ENCODE measurements at regions of chr9 and their contacts with region 1.

Region 1: GRCh38 chr9:121059998-121060636 is 10.0 kb upstream of the C5 start:
- DNase-seq: no peak
- ATAC-seq: peak in 1 of 2 donors; percentile 48
- H3K4me3 ChIP-seq: no peak overlapping the region
- H3K27ac ChIP-seq: no peak overlapping the region
- H3K4me1 ChIP-seq: no peaks in the 10 kb centered on the region
- H3K27me3 ChIP-seq: no peaks in the 10 kb centered on the region

Region 2: DNA sequence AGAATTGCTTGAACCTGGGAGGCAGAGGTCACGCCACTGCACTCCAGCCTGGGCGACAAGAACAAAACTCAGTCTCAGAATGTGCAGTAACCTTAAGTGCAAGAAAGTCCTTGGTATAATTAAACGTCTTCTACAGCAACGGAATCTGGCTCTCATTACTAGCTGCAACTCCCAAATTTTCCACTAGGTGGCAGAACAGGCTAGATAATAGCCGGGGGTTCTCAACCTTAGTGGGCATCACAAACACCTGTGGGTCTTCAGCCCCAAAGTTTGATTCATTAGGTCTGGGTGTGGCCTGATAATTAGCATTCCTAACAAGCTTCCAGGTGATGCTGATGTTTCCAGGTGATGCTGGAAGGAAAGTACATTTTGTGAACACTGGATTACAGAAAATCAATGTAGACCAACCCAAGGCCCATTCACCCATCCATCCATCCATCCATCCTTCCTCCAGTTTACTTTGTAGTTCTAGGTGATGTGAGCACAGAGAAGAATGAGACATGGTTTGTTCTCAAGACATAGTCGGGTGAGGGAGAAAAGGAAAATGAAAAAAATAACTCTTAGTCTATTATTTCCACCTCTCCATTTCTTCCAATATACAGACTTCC is 304.2 kb before region 1 on chr9:
- intact Hi-C with region 1: loop called (anchors 5 kb)
- DNase-seq: peak in 1 of 3 donors; percentile 56
- ATAC-seq: peak; percentile 59 to 68
- H3K4me3 ChIP-seq: no peak overlapping the region
- H3K27ac ChIP-seq: no peak overlapping the region
- H3K4me1 ChIP-seq: no peaks in the 10 kb centered on the region
- H3K27me3 ChIP-seq: no peaks in the 10 kb centered on the region

Region 3: GRCh38 chr9:120820095-120820494 is 240.0 kb before region 1 on chr9:
- intact Hi-C with region 1: no loop called
- DNase-seq: no peak
- ATAC-seq: no peak
- H3K4me3 ChIP-seq: no peak overlapping the region
- H3K27ac ChIP-seq: no peak overlapping the region
- H3K4me1 ChIP-seq: no peaks in the 10 kb centered on the region
- H3K27me3 ChIP-seq: no peaks in the 10 kb centered on the region

Region 4: DNA sequence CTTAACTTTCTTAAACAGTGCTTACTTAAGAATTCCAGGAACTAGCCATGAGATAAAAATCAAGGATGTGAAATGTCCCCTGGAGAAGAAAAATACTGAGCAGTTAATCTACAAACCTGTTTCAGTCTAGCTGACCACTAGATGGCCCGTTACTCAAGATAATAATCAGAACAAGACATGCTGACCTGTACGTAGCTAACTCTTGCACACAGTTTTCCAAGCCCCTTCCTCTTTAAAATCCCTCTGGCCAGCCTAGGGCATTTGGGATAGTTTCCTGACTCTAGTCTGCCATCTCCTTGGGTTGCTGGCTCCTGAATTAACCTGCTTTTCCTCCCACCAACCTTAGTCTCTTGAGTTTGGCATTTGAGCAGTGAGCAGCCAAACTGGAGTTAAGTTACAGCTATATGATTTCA is 74.3 kb before region 1 on chr9:
- intact Hi-C with region 1: loop called in 3 of 4 experiments (anchors 5 to 10 kb)
- DNase-seq: no peak
- ATAC-seq: peak; percentile 71 to 81
- H3K4me3 ChIP-seq: no peak overlapping the region
- H3K27ac ChIP-seq: no peak overlapping the region
- H3K4me1 ChIP-seq: peaks cover 2% of the 10 kb centered on the region
- H3K27me3 ChIP-seq: no peaks in the 10 kb centered on the region

Region 5: GRCh38 chr9:121009650-121010049 is 50.5 kb before region 1 on chr9:
- intact Hi-C with region 1: loop called in 1 of 4 experiments (anchors 10 kb)
- DNase-seq: no peak
- ATAC-seq: no peak
- H3K4me3 ChIP-seq: no peak overlapping the region
- H3K27ac ChIP-seq: no peak overlapping the region
- H3K4me1 ChIP-seq: peaks cover 1% of the 10 kb centered on the region
- H3K27me3 ChIP-seq: no peaks in the 10 kb centered on the region

Region 6: GRCh38 chr9:121169094-121169601 is 109.0 kb after region 1 on chr9:
- intact Hi-C with region 1: no loop called
- DNase-seq: peak; percentile 43 to 67 (median 53)
- ATAC-seq: peak; percentile 74 to 87
- H3K4me3 ChIP-seq: no peak overlapping the region
- H3K27ac ChIP-seq: no peak overlapping the region
- H3K4me1 ChIP-seq: no peaks in the 10 kb centered on the region
- H3K27me3 ChIP-seq: no peaks in the 10 kb centered on the region